CD14-positive monocyte (primary cell): ENCODE measurements at regions of chr10 and their contacts with region 1.

Region 1: GRCh38 chr10:31707093-31708039 is 221.3 kb downstream of the ARHGAP12 start:
- DNase-seq: peak; percentile 81 to 90 (median 86)
- H3K4me3 ChIP-seq: peak overlapping the region; percentile 17 to 72 (median 38)
- H3K4me3 Mint-ChIP-seq: peak overlapping the region; percentile 76 to 93
- H3K27ac ChIP-seq: peak overlapping the region; percentile 88 to 94
- H3K27ac Mint-ChIP-seq: peak overlapping the region; percentile 95 to 99 (median 98)
- H3K4me1 ChIP-seq: peaks cover 63 to 76% of the 10 kb centered on the region in 2 donors
- H3K4me1 Mint-ChIP-seq: peaks cover 71% of the 10 kb centered on the region
- H3K27me3 ChIP-seq: no peaks in the 10 kb centered on the region
- H3K27me3 Mint-ChIP-seq: peaks cover 0 to 2% (median 0%) of the 10 kb centered on the region in 3 donors
- CTCF ChIP-seq: no peak

Region 2: GRCh38 chr10:31749981-31750731 is 42.8 kb after region 1 on chr10:
- intact Hi-C with region 1: loop called (anchors 2 kb)
- DNase-seq: no peak
- H3K4me3 ChIP-seq: no peak overlapping the region
- H3K4me3 Mint-ChIP-seq: no peak overlapping the region
- H3K27ac ChIP-seq: peak overlapping the region in 1 of 2 donors; percentile 81
- H3K27ac Mint-ChIP-seq: peak overlapping the region; percentile 86 to 92 (median 87)
- H3K4me1 ChIP-seq: peaks cover 32 to 40% of the 10 kb centered on the region in 2 donors
- H3K4me1 Mint-ChIP-seq: peaks cover 41% of the 10 kb centered on the region
- H3K27me3 ChIP-seq: no peaks in the 10 kb centered on the region
- H3K27me3 Mint-ChIP-seq: peaks cover 0 to 4% (median 0%) of the 10 kb centered on the region in 3 donors
- CTCF ChIP-seq: no peak